Left colon (tissue), 2 donors: ENCODE measurements at regions of chr1 and their contacts with region 1.

Region 1: DNA sequence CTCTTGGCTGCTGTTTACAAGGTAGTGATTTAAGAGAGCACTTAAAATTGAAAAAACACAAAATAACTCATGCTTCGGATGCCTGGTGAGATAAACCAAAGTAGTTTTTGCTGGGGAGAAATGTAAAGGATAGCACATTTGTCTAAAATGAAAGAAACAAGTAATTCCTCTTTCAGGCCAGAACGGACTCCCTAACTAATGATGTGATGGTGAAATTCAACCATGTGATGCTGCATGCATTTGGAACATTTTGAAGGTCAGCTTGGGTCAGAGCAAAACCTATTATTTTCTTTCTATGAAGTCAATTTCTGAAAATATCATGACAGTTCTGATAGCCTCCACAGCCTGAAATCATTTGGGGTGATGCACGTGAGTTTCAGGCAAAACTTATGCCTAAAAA is 27.6 kb downstream of the NMNAT2 start:
- DNase-seq: no peak
- ATAC-seq: no peak

Region 2: GRCh38 chr1:183339556-183340167 is 50.9 kb before region 1 on chr1:
- intact Hi-C with region 1: loop called in 1 of 2 experiments (anchors 2 kb)
- DNase-seq: no peak
- ATAC-seq: no peak